ENCODE measurements at regions of chr3 and their contacts with region 1.

Region 1: DNA sequence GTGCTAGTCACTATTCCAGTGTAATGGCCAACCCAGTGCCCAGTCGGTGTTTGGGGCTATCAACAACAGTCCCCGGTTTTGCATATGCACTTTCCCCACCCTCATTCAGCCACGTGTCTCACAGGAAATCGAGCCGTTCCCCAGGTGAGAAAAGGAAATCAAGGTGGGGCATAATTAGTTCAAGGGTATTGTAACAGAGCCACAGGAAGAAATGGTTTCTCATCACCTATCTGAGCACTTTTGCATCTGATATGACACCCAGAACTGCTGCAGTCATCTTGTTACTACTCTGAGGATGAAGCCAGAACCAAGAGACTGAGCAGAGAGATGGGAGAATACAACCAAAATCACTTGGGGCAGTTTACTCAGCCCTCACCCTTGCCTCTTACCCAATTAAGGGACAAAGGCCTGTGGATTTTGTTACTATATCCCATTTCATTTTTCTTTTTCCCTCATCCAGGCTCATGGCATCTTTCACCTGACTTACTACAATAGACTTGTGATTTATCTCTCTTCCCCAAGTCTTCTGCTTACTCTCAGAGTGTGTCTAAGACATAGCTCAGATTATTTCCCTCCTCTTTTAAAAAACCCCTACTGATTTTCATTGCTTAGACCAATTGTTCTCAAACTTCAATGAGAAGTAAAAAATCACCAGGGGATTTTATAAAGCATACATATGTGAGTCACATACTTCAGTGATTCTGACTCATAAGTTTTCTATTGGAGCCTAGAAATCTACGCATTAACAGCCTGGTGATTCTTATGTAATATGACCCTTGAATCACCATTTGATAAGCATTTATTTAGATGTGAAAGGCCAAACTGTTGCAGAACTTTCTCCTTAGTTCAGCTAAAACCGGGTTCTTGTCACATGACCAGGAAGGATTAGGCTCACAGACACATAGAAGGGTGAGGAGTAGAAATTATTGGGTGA is 40.5 kb downstream of the TRAT1 start:
- DNase-seq: peak; percentile 69
- H3K4me3 Mint-ChIP-seq: peak overlapping the region; percentile 63
- H3K27ac Mint-ChIP-seq: peak overlapping the region; percentile 99
- H3K4me1 Mint-ChIP-seq: peaks cover 42% of the 10 kb centered on the region
- H3K27me3 Mint-ChIP-seq: no peaks in the 10 kb centered on the region

Region 2: DNA sequence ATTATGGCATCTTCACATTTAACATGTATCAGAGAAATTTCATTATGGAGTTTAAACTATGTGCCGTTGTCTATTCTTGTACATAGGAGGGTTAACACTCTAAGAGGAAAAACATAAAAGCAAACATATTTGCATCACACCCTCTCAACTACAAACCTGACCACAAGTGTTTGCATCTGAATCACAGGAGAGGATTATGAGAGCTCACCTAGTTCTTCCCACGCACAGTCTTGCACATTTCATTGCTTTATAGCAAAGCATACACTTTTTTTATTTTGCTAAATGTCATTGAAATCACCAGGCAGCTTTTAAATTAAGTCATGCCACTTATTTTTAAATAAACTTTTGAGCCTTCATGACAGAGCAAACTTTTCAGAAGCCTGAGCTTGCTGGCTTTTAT is 28.0 kb before region 1 on chr3:
- intact Hi-C with region 1: loop called (anchors 1 kb)
- DNase-seq: peak; percentile 86
- H3K4me3 Mint-ChIP-seq: peak overlapping the region; percentile 90
- H3K27ac Mint-ChIP-seq: peak overlapping the region; percentile 98
- H3K4me1 Mint-ChIP-seq: peaks cover 70% of the 10 kb centered on the region
- H3K27me3 Mint-ChIP-seq: no peaks in the 10 kb centered on the region

Region 3: GRCh38 chr3:108883373-108883772 is 20.2 kb after region 1 on chr3:
- intact Hi-C with region 1: loop called (anchors 2 kb)
- DNase-seq: peak; percentile 51
- H3K4me3 Mint-ChIP-seq: no peak overlapping the region
- H3K27ac Mint-ChIP-seq: no peak overlapping the region
- H3K4me1 Mint-ChIP-seq: peaks cover 10% of the 10 kb centered on the region
- H3K27me3 Mint-ChIP-seq: no peaks in the 10 kb centered on the region

Region 4: GRCh38 chr3:108897883-108898282 is 34.8 kb after region 1 on chr3:
- intact Hi-C with region 1: loop called (anchors 5 kb)
- DNase-seq: no peak
- H3K4me3 Mint-ChIP-seq: peak overlapping the region; percentile 20
- H3K27ac Mint-ChIP-seq: peak overlapping the region; percentile 67
- H3K4me1 Mint-ChIP-seq: peaks cover 23% of the 10 kb centered on the region
- H3K27me3 Mint-ChIP-seq: peaks cover 3% of the 10 kb centered on the region